ENCODE measurements at regions of chr15 and their contacts with region 1.

Region 1: GRCh38 chr15:35746121-35746520 is 200.2 kb upstream of the DPH6 start:
- DNase-seq: no peak
- ATAC-seq: no peak
- H3K4me3 ChIP-seq: no peak overlapping the region
- H3K27ac ChIP-seq: no peak overlapping the region
- H3K4me1 ChIP-seq: peaks cover 0 to 1% (median 0%) of the 10 kb centered on the region in 9 donors
- H3K27me3 ChIP-seq: no peaks in the 10 kb centered on the region
- CTCF ChIP-seq: no peak

Region 2: GRCh38 chr15:35713733-35714132 is 32.4 kb before region 1 on chr15:
- intact Hi-C with region 1: loop called in 1 of 10 experiments (anchors 5 kb)
- DNase-seq: no peak
- ATAC-seq: peak in 1 of 8 donors; percentile 20
- H3K4me3 ChIP-seq: no peak overlapping the region
- H3K27ac ChIP-seq: no peak overlapping the region
- H3K4me1 ChIP-seq: peaks cover 0 to 4% (median 0%) of the 10 kb centered on the region in 9 donors
- H3K27me3 ChIP-seq: no peaks in the 10 kb centered on the region
- CTCF ChIP-seq: no peak

Region 3: DNA sequence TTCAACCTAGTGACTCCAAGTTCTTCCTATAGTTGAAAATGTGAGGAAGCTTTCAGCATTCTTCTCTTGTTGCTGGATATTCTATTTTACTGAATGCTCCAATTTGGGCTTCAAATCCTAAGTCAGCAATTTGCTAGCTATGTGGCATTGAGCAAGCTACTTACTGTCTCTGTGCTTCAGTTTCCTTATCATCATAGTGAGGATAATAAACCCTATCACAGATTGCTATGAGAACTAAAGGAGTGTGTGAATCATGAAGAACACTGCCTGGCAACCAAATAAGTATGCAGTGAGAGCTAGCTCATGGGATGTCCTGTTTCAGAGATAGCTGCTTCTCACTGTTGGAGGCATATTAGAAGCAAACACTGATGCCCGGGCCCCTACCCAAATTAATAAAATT is 669.5 kb after region 1 on chr15:
- intact Hi-C with region 1: no loop called
- DNase-seq: no peak
- ATAC-seq: no peak
- H3K4me3 ChIP-seq: no peak overlapping the region
- H3K27ac ChIP-seq: no peak overlapping the region
- H3K4me1 ChIP-seq: no peaks in the 10 kb centered on the region
- H3K27me3 ChIP-seq: no peaks in the 10 kb centered on the region
- CTCF ChIP-seq: no peak

Measured in heart right ventricle (tissue), 16 donors.